Panc1 (cell line): ENCODE measurements at regions of chr22 and their contacts with region 1.

Region 1: DNA sequence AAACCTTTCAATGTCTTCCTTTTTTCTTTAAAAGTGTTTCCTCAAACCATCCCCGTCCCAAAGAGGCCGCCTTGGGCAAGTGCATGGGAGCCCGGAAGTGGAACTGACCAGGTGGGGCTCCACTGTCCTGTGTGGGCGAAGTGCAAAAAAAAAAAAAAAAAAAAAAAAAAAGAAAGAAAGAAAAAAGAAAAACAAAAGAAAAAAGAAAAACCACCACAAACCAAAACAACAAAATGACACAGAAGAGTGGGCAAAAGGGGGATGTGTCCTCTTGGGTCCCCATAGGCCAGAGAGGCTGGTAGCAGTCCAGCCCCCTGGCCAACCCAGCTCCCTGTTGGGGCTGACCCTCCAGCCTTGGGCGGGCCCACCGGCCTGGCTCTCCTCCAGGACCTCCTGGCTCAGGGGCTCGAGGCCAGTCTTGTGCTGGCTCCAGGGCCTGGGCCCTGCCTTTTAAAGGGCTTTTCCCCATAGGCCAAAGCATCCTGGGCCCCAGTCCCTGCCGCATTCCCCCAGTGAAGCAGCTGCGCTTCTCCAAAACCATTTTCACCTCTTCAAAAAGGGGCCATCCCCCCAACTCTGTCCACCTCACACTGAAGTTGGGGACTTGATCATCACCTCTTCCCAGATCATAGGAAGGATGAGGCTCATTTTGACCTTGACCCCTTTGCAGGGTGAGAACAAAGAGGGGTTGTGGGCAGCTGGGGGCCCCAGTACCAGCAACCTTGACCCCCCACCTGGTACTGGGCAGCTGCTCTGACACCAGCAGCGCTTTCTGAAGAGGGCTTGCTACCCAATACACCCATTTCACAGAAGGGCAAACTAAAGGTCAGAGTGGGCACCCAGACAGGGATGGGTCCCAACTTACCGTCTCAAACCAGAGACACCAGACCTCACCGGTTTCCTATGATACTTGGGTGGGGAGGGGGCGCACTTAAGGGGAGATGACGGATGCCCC is 9.4 kb downstream of the CBX6 start:
- DNase-seq: no peak
- ATAC-seq: peak; percentile 25; the same call in 1 of the 2 replicates
- H3K4me3 ChIP-seq: no peak overlapping the region
- H3K27ac ChIP-seq: no peak overlapping the region
- H3K4me1 ChIP-seq: peaks cover 29% of the 10 kb centered on the region
- H3K27me3 ChIP-seq: no peaks in the 10 kb centered on the region
- CTCF ChIP-seq: no peak

Region 2: DNA sequence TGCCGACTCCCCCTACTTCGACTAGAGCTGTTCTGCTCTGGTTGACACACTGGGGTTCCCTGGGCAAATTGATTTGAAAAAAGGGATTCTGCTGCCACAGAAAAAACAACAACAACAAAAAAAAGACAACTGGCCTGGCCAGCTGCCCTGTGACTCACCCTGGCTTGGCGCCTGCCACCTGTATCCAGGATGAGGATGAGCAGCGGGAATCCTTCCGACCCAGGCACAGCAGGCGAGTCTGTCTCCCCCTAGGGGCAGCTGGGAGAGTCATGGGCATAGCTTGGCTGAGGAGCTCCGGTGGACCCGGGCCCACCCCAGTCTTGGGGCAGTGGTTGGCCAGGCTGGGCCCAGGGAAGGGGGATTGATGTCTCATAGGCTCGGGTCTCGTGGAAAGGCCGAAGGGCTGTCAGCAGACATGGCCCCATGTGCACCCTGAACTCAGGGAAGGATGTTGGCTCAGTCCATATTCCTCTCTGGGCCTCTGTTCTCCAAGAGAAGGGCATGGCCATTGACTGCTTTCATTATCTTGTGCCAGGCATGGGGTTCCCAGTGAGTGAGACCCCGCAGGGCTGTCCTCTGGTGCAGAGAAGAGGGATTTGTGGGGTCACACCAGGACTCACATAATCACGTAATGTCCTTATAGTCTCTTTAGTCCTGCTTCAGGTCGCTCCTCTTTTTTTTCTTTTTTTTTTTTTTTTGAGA is 96.4 kb before region 1 on chr22:
- CTCF ChIA-PET with region 1: interaction called, 9 read pairs
- POLR2A ChIA-PET with region 1: no interaction called
- in situ Hi-C with region 1: no loop called
- intact Hi-C with region 1: loop called (anchors 5 kb)
- DNase-seq: no peak
- ATAC-seq: peak; percentile 71
- H3K4me3 ChIP-seq: no peak overlapping the region
- H3K27ac ChIP-seq: no peak overlapping the region
- H3K4me1 ChIP-seq: no peaks in the 10 kb centered on the region; the same call in 1 of the 2 replicates
- H3K27me3 ChIP-seq: no peaks in the 10 kb centered on the region
- CTCF ChIP-seq: peak; percentile 88